Activated T-helper 2 cell treated with anti-CD3 and anti-CD28 coated beads, Interferon-gamma antibody, Interleukin-2, Interleukin-4, amounts not matched to agents 10 μg/mL and 5 μg/mL and 100 μg/mL, durations not matched to agents 14 hours and 24 hours and 36 hours (primary cell): ENCODE measurements at regions of chr22 and their contacts with region 1.

Region 1: DNA sequence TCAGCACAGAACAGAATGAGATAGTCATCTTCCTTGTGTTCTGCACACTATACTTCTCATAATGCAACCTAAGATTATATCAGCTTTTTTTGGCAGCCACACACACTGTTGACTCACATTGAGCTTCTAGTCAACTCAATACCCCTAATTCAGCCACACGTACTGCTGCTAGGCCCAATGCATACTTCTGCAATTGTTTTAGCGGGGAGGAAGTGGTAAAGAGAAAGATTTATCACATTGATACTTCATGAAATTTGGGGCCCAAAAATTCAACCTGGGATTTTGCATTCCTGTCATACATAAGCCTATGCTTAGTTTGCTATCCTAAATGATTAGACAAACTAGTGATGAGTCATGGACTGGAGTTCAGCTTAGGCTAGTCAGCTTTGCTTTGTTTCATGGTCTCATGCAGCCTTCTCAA is 8.6 kb upstream of the UPB1 start:
- DNase-seq: peak; percentile 24
- H3K4me3 Mint-ChIP-seq: no peak overlapping the region
- H3K27ac Mint-ChIP-seq: no peak overlapping the region
- H3K4me1 Mint-ChIP-seq: peaks cover 24% of the 10 kb centered on the region
- H3K27me3 Mint-ChIP-seq: peaks cover 24% of the 10 kb centered on the region

Region 2: GRCh38 chr22:24338726-24339451 is 147.6 kb before region 1 on chr22:
- intact Hi-C with region 1: no loop called
- DNase-seq: no peak
- H3K4me3 Mint-ChIP-seq: no peak overlapping the region
- H3K27ac Mint-ChIP-seq: no peak overlapping the region
- H3K4me1 Mint-ChIP-seq: peaks cover 11% of the 10 kb centered on the region
- H3K27me3 Mint-ChIP-seq: no peaks in the 10 kb centered on the region

Region 3: GRCh38 chr22:24379536-24379935 is 107.0 kb before region 1 on chr22:
- intact Hi-C with region 1: loop called (anchors 1 kb)
- DNase-seq: no peak
- H3K4me3 Mint-ChIP-seq: peak overlapping the region; percentile 0
- H3K27ac Mint-ChIP-seq: no peak overlapping the region
- H3K4me1 Mint-ChIP-seq: peaks cover 30% of the 10 kb centered on the region
- H3K27me3 Mint-ChIP-seq: no peaks in the 10 kb centered on the region

Region 4: GRCh38 chr22:24433813-24434470 is 52.6 kb before region 1 on chr22:
- intact Hi-C with region 1: loop called (anchors 1 kb)
- DNase-seq: no peak
- H3K4me3 Mint-ChIP-seq: peak overlapping the region; percentile 67
- H3K27ac Mint-ChIP-seq: peak overlapping the region; percentile 100
- H3K4me1 Mint-ChIP-seq: peaks cover 72% of the 10 kb centered on the region
- H3K27me3 Mint-ChIP-seq: no peaks in the 10 kb centered on the region

Region 5: GRCh38 chr22:24445481-24446259 is 40.8 kb before region 1 on chr22:
- intact Hi-C with region 1: loop called (anchors 5 kb)
- DNase-seq: no peak
- H3K4me3 Mint-ChIP-seq: no peak overlapping the region
- H3K27ac Mint-ChIP-seq: peak overlapping the region; percentile 30
- H3K4me1 Mint-ChIP-seq: peaks cover 38% of the 10 kb centered on the region
- H3K27me3 Mint-ChIP-seq: no peaks in the 10 kb centered on the region

Region 6: GRCh38 chr22:24460418-24461089 is 26.0 kb before region 1 on chr22:
- intact Hi-C with region 1: loop called (anchors 2 kb)
- DNase-seq: no peak
- H3K4me3 Mint-ChIP-seq: no peak overlapping the region
- H3K27ac Mint-ChIP-seq: no peak overlapping the region
- H3K4me1 Mint-ChIP-seq: peaks cover 21% of the 10 kb centered on the region
- H3K27me3 Mint-ChIP-seq: no peaks in the 10 kb centered on the region

Region 7: DNA sequence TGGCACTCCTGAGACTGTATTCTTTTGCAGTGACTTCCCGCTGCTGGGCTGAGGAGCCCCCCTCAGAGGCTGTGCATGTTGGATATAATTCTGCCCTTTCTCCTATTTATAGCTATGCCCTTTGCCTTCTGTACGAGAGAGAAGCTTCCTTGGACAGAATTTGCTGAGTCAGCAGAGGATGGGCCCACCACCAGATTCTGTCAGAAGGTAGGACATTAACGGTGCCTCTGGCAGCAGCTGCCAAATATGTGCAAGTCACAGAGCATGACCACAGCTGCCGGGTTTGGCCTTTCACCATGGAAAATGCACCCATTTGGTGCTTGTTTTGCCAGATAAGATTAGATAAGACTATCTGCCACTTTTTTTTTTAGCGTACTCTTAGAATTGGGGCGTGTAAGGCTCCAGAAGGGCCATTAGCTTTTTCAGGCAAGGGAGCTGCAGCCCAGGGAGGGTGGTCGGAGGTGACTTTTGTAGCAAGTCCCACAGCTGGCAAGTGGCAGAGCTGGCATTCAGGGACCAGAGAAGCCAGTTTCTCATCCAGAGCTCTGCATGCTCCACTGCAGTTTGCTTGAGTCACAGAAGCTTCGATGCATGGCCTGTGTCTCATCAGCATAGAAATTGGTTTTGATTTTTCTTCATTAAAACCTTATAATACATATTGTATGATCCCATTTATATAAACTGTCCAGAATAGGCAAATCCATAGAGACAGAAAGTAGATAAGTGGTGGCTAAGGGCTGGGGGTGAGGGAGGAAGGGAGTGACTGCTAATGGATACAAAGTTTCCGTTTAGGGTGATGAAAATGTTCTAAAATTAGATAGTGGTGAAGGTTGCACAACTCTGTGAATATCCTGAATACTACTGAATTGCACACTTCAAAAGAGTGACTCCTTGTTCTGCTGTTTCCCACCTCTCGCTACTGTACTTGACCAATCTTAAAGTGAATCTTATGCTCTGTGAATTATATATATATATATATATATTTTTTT is 24.4 kb after region 1 on chr22:
- intact Hi-C with region 1: loop called (anchors 1 kb)
- DNase-seq: no peak
- H3K4me3 Mint-ChIP-seq: no peak overlapping the region
- H3K27ac Mint-ChIP-seq: peak overlapping the region; percentile 39
- H3K4me1 Mint-ChIP-seq: peaks cover 31% of the 10 kb centered on the region
- H3K27me3 Mint-ChIP-seq: peaks cover 4% of the 10 kb centered on the region